ENCODE measurements at regions of chr19 and their contacts with region 1.

Region 1: DNA sequence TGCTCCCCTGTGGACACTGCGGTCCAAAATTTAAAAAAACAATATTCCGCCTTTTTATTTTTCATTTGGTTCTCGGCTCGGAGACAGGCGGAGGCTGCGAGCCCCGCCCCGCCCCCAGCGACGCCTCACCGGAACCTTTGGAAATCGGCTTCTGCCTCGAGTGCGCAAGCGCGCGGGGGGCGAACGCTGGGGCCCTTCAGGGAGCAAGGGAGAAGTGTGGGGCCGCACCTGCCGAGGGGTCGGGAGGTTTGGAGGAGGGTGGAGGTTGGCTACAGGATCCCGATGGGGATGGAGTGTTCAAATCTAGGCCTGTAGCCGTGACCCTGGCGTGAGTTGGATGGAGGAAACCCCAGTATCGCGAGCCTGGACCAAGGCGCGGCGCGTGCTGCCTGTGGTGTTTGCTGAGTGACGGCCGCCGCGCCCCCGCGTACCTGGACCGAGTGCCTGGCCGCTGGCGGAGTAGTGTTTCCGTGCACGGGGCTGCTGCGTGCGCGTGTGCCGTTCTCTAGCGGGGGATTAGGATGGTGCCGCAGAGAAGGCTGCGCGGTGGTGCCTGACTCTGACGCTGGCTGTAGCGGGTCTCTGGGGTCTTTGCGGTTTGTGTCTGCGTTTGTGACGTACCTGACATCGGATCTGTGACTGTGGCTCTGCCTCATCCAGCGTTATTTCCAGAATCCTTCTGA is 565 bp upstream of the ZFP30 start:
- DNase-seq: peak; percentile 88

Region 2: GRCh38 chr19:37172368-37173366 is 483.2 kb before region 1 on chr19 and contains the start of gene ZNF585A:
- intact Hi-C with region 1: no loop called
- DNase-seq: peak; percentile 95
- total RNA-seq, gene ZNF585A: 12.2 TPM

Region 3: DNA sequence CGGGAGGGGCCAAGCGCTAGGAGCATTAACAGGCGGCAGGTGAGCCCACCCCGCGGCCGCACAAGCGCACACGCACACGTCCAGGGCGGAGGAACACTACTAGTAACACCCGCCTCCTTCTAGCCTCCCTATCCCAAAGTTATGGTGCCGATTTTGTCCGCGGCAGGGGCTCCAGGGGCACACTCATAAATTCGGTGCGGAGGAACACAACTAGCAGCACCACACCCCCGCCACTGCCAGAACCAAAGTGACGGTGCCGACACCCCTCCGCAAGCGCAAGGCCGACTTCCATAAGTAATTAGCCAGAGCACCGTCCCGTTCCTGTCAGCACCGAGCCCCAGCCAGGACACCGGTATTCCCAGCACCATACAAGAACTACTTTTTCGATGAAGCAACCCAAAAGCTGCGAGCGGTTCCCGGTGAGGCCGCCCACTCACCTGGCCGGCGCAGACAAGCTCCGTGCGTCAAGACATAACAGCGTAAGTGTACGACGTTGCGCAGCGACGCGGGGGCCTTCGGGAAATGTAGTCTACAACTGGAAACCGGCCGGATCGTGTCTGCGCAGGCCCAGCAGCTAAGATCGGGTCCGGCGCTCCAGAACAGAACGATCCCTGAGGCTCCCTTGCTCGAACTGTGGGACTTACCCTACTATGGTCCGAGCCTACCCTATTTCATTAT is 61.4 kb before region 1 on chr19 and contains the starts of genes ZNF540 and ZNF571:
- intact Hi-C with region 1: loop called (anchors 5 kb)
- DNase-seq: peak; percentile 96
- total RNA-seq, gene ZNF540: 4.5 TPM
- total RNA-seq, gene ZNF571: 4.4 TPM

Region 4: DNA sequence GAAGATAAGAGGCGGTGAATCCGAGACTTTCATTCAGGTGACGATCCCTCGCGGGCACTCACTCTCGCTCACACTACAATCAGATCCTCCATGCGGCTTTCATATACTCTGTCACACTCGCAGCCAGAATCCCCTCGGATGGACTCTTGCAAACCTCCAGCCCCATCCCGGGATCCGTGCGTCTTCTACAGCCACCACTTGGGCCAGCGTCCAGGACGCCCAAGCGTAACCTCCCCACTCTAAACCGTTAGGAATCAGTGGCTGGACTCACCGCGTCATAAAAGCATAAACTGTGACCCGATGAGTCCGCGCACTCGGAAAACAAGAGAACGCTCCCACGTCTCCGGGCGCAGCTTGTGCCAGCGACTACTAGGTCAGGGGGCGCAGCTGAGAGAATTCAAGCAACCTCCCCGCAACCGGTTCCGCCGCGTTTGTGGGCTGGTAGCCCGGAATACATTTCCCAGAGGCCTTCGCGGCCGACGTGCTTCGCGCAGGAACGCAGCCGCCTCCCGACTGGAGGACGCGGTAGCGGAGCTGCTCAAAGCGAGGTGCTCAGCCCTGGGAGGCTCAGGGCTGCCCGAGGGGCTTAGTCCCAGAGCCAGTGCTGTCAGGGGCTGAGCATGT is 36.2 kb after region 1 on chr19:
- intact Hi-C with region 1: loop called (anchors 1 kb)
- DNase-seq: peak; percentile 93

Region 5: GRCh38 chr19:37719111-37719926 is 63.5 kb after region 1 on chr19 and contains the start of gene ZNF607:
- intact Hi-C with region 1: loop called (anchors 2 kb)
- DNase-seq: peak; percentile 93
- total RNA-seq, gene ZNF607: 4.9 TPM

Measured in cardiac septum (tissue), 1 donor.